ENCODE measurements at regions of chr7 and their contacts with region 1.

Region 1: GRCh38 chr7:29921404-29922010 is 68.1 kb downstream of the SCRN1 start:
- DNase-seq: peak; percentile 59
- ATAC-seq: peak; percentile 91
- H3K4me3 Mint-ChIP-seq: no peak overlapping the region
- H3K27ac Mint-ChIP-seq: no peak overlapping the region
- H3K4me1 Mint-ChIP-seq: no peaks in the 10 kb centered on the region
- H3K27me3 Mint-ChIP-seq: no peaks in the 10 kb centered on the region

Region 2: GRCh38 chr7:29878081-29878688 is 43.3 kb before region 1 on chr7:
- CTCF ChIA-PET with region 1: interaction called, 20 read pairs
- POLR2A ChIA-PET with region 1: no interaction called
- DNase-seq: peak; percentile 34
- ATAC-seq: peak; percentile 33
- H3K4me3 Mint-ChIP-seq: no peak overlapping the region
- H3K27ac Mint-ChIP-seq: no peak overlapping the region
- H3K4me1 Mint-ChIP-seq: no peaks in the 10 kb centered on the region
- H3K27me3 Mint-ChIP-seq: peaks cover 22% of the 10 kb centered on the region

Region 3: DNA sequence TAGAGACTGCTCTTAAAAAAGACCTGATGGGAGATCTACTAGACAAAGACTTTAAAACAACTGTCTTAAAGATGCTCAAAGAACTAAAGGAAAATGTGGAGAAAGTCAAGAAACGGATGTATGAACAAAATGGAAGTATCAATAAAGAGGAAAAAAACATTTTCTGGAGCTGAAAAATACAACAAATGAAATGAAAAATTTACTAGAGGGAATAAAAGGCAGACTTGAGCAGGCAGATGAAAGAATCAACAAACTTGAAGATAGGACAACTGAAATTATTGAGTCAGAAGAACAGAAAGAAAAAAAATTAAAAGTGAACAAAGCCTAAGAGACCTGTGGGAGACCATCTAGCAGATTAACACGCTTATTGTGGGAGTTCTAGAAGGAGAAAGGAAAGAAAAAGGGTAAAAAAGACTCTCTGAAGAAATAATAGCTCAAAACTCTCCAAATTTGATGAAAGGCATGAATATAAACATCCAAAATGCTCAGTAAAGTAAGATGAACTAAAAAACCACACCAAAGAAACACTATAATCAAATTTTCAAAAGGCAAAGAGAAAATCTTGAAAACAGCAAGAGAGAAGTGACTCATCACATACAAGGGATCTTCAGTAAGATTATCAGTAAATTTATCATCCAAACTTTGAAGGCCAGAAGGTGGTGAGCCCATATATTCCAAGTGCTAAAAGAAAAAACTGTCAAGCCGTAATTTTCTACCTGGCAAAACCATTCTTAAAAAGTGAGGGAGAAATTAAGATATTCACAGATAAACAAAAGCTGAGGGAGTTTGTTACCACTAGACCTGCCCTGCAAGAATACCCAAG is 15.1 kb before region 1 on chr7:
- CTCF ChIA-PET with region 1: interaction called, 19 read pairs
- POLR2A ChIA-PET with region 1: no interaction called
- DNase-seq: no peak
- ATAC-seq: no peak
- H3K4me3 Mint-ChIP-seq: no peak overlapping the region
- H3K27ac Mint-ChIP-seq: no peak overlapping the region
- H3K4me1 Mint-ChIP-seq: no peaks in the 10 kb centered on the region
- H3K27me3 Mint-ChIP-seq: peaks cover 8% of the 10 kb centered on the region

Region 4: GRCh38 chr7:30074422-30075030 is 153.0 kb after region 1 on chr7:
- CTCF ChIA-PET with region 1: interaction called, 11 read pairs
- POLR2A ChIA-PET with region 1: no interaction called
- DNase-seq: no peak
- ATAC-seq: no peak
- H3K4me3 Mint-ChIP-seq: no peak overlapping the region
- H3K27ac Mint-ChIP-seq: no peak overlapping the region
- H3K4me1 Mint-ChIP-seq: no peaks in the 10 kb centered on the region
- H3K27me3 Mint-ChIP-seq: no peaks in the 10 kb centered on the region

Region 5: GRCh38 chr7:30105208-30105607 is 183.7 kb after region 1 on chr7:
- CTCF ChIA-PET with region 1: no interaction called
- POLR2A ChIA-PET with region 1: no interaction called
- DNase-seq: no peak
- ATAC-seq: no peak
- H3K4me3 Mint-ChIP-seq: no peak overlapping the region
- H3K27ac Mint-ChIP-seq: no peak overlapping the region
- H3K4me1 Mint-ChIP-seq: no peaks in the 10 kb centered on the region
- H3K27me3 Mint-ChIP-seq: no peaks in the 10 kb centered on the region